ENCODE measurements at regions of chr12 and their contacts with region 1.

Region 1: GRCh38 chr12:47032644-47033043 is 46.8 kb upstream of the PCED1B start:
- DNase-seq: peak in 1 of 2 donors; percentile 80
- ATAC-seq: peak; percentile 57 to 88 (median 85)
- H3K4me3 ChIP-seq: no peak overlapping the region
- H3K4me3 Mint-ChIP-seq: no peak overlapping the region
- H3K27ac ChIP-seq: no peak overlapping the region
- H3K27ac Mint-ChIP-seq: no peak overlapping the region
- H3K4me1 ChIP-seq: no peaks in the 10 kb centered on the region
- H3K4me1 Mint-ChIP-seq: no peaks in the 10 kb centered on the region
- H3K27me3 ChIP-seq: no peaks in the 10 kb centered on the region
- H3K27me3 Mint-ChIP-seq: peaks cover 4 to 6% of the 10 kb centered on the region in 2 donors
- CTCF ChIP-seq: peak; percentile 67

Region 2: GRCh38 chr12:46983393-46984266 is 49.0 kb before region 1 on chr12:
- intact Hi-C with region 1: no loop called
- DNase-seq: peak in 1 of 2 donors; percentile 64
- ATAC-seq: peak; percentile 69 to 86 (median 72)
- H3K4me3 ChIP-seq: no peak overlapping the region
- H3K4me3 Mint-ChIP-seq: no peak overlapping the region
- H3K27ac ChIP-seq: no peak overlapping the region
- H3K27ac Mint-ChIP-seq: no peak overlapping the region
- H3K4me1 ChIP-seq: no peaks in the 10 kb centered on the region
- H3K4me1 Mint-ChIP-seq: peaks cover 0 to 6% of the 10 kb centered on the region in 2 donors
- H3K27me3 ChIP-seq: peaks cover 2% of the 10 kb centered on the region
- H3K27me3 Mint-ChIP-seq: peaks cover 34 to 47% of the 10 kb centered on the region in 2 donors
- CTCF ChIP-seq: peak; percentile 74

Region 3: DNA sequence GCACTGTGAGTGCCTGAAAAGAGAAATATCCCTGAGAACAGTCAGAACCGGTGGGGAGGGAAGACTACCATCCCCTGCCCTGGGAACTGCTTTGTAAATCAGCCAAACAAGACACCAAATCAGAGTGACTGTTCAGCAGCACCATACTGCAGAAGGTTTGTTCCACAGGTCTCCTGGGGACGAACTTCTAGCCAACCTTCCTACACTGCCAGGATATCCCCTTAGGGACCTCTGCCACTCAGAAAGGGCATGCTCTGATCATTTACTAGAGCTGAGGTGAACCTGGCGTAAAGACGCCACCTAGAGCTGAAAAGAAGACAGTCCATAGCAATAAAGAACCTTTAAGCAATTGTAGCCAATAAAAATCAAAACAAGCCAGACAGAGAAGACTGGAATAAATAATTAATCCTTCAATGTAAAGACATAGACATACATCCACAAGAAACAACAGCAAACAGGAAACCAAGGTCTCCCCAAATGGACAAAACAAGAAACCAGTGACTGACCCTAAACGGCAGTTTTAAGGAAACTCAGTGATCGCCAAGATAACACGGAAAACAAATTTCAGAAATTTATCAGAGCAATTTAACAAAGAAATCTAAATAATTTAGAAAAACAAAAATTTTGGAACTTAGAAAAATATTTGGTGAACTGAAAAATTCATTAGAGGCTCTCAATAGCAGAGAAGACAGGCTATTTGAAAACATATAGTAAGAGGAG is 275.2 kb after region 1 on chr12:
- intact Hi-C with region 1: loop called (anchors 1 kb)
- DNase-seq: peak; percentile 35 to 81
- ATAC-seq: peak; percentile 92 to 95 (median 93)
- H3K4me3 ChIP-seq: peak overlapping the region; percentile 42
- H3K4me3 Mint-ChIP-seq: peak overlapping the region; percentile 92
- H3K27ac ChIP-seq: peak overlapping the region; percentile 51
- H3K27ac Mint-ChIP-seq: peak overlapping the region; percentile 86 to 93
- H3K4me1 ChIP-seq: peaks cover 12% of the 10 kb centered on the region
- H3K4me1 Mint-ChIP-seq: peaks cover 22% of the 10 kb centered on the region in 2 donors
- H3K27me3 ChIP-seq: no peaks in the 10 kb centered on the region
- H3K27me3 Mint-ChIP-seq: no peaks in the 10 kb centered on the region
- CTCF ChIP-seq: peak; percentile 68

Region 4: GRCh38 chr12:47636908-47637780 is 604.5 kb after region 1 on chr12:
- intact Hi-C with region 1: loop called (anchors 5 kb)
- DNase-seq: peak; percentile 33 to 54
- ATAC-seq: no peak
- H3K4me3 ChIP-seq: no peak overlapping the region
- H3K4me3 Mint-ChIP-seq: no peak overlapping the region
- H3K27ac ChIP-seq: no peak overlapping the region
- H3K27ac Mint-ChIP-seq: no peak overlapping the region
- H3K4me1 ChIP-seq: no peaks in the 10 kb centered on the region
- H3K4me1 Mint-ChIP-seq: peaks cover 5 to 6% of the 10 kb centered on the region in 2 donors
- H3K27me3 ChIP-seq: no peaks in the 10 kb centered on the region
- H3K27me3 Mint-ChIP-seq: no peaks in the 10 kb centered on the region
- CTCF ChIP-seq: peak; percentile 36

Region 5: DNA sequence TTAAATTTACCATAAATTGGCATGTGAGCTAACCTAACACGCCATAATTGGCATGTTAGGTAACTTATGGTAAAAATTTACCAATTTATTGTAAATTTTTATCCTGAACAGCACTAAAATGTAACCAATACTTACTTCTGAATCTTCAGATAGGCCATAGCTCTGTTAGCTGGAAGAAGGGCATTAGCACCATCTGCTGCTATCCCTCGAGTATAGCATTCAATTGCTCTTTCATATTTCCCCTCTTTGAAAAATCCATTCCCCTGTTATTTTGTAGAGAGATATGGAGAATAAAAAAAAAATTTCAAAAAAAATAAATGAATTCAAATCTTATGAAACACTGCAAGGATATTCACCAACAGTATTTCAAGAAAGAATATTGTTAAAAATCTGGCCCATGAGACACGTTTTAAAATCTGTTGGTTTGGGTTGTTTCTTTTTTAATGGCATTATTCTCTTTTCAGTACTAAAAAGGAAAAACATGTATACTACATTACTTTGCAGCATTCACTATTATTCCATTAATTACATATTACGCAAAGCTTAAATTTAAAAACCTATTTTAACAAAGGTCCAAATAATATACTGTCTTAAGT is 654.1 kb after region 1 on chr12:
- intact Hi-C with region 1: loop called (anchors 1 kb)
- DNase-seq: peak in 1 of 2 donors; percentile 67
- ATAC-seq: peak in 2 of 3 donors; percentile 52 to 59
- H3K4me3 ChIP-seq: no peak overlapping the region
- H3K4me3 Mint-ChIP-seq: no peak overlapping the region
- H3K27ac ChIP-seq: no peak overlapping the region
- H3K27ac Mint-ChIP-seq: no peak overlapping the region
- H3K4me1 ChIP-seq: no peaks in the 10 kb centered on the region
- H3K4me1 Mint-ChIP-seq: no peaks in the 10 kb centered on the region
- H3K27me3 ChIP-seq: no peaks in the 10 kb centered on the region
- H3K27me3 Mint-ChIP-seq: no peaks in the 10 kb centered on the region
- CTCF ChIP-seq: peak; percentile 35

Measured in natural killer cell (primary cell).